MCF 10A (cell line): ENCODE measurements at regions of chr19 and their contacts with region 1.

Region 1: DNA sequence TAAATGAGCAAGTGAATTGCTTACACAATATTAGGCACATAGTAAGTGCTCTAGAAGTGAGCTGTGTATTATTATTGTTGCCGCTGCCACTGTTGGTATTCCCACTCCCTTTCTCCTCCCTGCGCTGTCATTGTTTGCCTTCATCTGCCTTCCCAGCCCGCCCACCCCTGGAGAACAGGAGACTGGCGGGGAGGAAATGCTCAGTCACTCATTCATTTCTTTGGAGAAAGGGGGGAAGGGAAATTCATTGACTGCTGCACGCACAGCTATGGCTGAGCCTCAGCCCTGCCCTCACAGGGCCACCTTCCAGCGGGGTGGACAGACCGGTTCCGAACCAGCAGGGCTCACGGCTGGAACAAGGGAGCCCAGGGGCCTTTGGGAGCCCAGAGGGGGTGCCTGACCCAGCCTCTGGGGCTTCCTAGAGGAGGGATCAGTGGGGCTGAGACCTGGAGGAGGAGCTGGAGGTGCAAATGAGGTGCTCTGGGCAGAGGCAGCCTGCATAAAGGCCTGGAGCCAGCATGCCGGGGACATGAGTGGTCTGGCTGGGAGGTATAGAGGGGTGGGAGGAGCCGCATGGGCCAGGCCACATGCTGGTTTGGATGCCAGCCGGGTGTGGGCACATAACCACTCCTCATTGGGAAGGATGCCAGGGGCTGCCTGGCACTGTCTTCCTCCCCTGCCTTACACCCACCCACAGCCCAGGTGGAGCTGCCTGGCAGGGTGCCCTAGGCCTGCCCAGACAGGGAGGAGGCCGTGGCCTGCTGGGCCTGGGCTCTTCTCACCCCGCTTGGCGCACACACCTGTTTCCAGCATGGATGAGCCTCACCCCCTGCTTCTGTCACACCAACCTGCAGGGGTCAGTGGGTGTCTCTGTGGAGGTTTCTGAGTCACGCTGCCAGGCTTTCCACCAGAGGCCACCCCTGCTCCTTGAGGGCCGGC is 26.8 kb downstream of the PPP5C start:
- DNase-seq: peak; percentile 100
- H3K4me3 Mint-ChIP-seq: peak overlapping the region; percentile 61
- H3K27ac Mint-ChIP-seq: peak overlapping the region; percentile 77
- H3K4me1 Mint-ChIP-seq: peaks cover 47% of the 10 kb centered on the region
- H3K27me3 Mint-ChIP-seq: no peaks in the 10 kb centered on the region
- CTCF ChIP-seq: no peak

Region 2: DNA sequence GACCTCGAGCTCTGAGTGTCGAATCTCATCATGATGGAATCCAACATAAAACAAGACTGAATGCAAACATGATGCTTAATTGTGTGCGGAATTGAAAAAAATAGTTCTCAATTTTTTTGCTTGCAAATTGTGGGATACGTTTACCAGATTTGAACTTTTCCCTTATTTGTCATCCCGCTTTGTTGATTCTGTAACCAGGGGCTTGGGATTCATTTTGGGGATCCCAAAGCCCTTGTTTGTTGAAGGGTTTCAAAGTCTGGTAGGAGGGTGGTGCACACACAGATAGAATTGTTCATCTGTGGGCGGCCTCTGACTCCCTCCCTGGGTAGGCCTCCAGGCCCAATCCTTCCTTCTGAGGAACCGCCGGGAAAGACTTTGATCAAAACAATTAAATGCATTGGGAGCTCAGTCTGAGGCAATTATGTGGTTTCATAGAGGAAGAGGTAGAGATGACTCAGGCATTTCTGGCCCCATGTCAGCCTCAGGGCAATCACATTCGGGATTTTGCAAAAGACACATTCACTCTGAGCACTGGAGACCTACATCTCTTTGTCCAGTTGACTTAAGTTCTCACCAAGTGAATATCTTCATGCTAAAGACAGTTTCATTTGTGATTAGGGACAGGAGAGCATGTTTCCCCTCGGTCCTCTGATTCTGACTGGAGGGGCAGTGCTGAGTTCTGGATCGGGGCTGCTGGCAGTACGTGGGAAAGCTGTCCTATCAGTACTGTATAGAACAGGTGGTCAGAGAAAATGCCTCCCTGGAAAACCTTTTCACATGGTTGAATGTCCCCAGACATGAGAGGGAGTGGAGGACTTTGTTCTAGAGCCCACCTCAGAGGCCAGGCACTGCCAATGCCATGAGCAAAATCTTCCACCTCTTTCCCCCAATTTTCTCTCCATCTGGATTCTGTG is 305.1 kb before region 1 on chr19:
- CTCF ChIA-PET with region 1: no interaction called
- POLR2A ChIA-PET with region 1: no interaction called
- intact Hi-C with region 1: loop called (anchors 5 kb)
- DNase-seq: peak; percentile 99
- H3K4me3 Mint-ChIP-seq: peak overlapping the region; percentile 41
- H3K27ac Mint-ChIP-seq: peak overlapping the region; percentile 77
- H3K4me1 Mint-ChIP-seq: peaks cover 62% of the 10 kb centered on the region
- H3K27me3 Mint-ChIP-seq: no peaks in the 10 kb centered on the region
- CTCF ChIP-seq: no peak

Region 3: GRCh38 chr19:46283771-46284170 is 89.9 kb before region 1 on chr19:
- CTCF ChIA-PET with region 1: interaction called, 33 read pairs
- POLR2A ChIA-PET with region 1: interaction called, 15 read pairs
- intact Hi-C with region 1: loop called (anchors 1 kb)
- DNase-seq: no peak
- H3K4me3 Mint-ChIP-seq: no peak overlapping the region
- H3K27ac Mint-ChIP-seq: no peak overlapping the region
- H3K4me1 Mint-ChIP-seq: peaks cover 4% of the 10 kb centered on the region
- H3K27me3 Mint-ChIP-seq: no peaks in the 10 kb centered on the region
- CTCF ChIP-seq: no peak

Region 4: GRCh38 chr19:46288896-46289588 is 84.6 kb before region 1 on chr19:
- CTCF ChIA-PET with region 1: interaction called, 3 read pairs
- POLR2A ChIA-PET with region 1: interaction called, 15 read pairs
- intact Hi-C with region 1: no loop called
- DNase-seq: peak; percentile 92
- H3K4me3 Mint-ChIP-seq: peak overlapping the region; percentile 48
- H3K27ac Mint-ChIP-seq: peak overlapping the region; percentile 88
- H3K4me1 Mint-ChIP-seq: peaks cover 17% of the 10 kb centered on the region
- H3K27me3 Mint-ChIP-seq: no peaks in the 10 kb centered on the region
- CTCF ChIP-seq: no peak

Region 5: GRCh38 chr19:46299004-46299509 is 74.6 kb before region 1 on chr19:
- CTCF ChIA-PET with region 1: interaction called, 3 read pairs
- POLR2A ChIA-PET with region 1: interaction called, 40 read pairs
- intact Hi-C with region 1: no loop called
- DNase-seq: peak; percentile 96
- H3K4me3 Mint-ChIP-seq: peak overlapping the region; percentile 29
- H3K27ac Mint-ChIP-seq: peak overlapping the region; percentile 79
- H3K4me1 Mint-ChIP-seq: peaks cover 25% of the 10 kb centered on the region
- H3K27me3 Mint-ChIP-seq: no peaks in the 10 kb centered on the region
- CTCF ChIP-seq: no peak

Region 6: DNA sequence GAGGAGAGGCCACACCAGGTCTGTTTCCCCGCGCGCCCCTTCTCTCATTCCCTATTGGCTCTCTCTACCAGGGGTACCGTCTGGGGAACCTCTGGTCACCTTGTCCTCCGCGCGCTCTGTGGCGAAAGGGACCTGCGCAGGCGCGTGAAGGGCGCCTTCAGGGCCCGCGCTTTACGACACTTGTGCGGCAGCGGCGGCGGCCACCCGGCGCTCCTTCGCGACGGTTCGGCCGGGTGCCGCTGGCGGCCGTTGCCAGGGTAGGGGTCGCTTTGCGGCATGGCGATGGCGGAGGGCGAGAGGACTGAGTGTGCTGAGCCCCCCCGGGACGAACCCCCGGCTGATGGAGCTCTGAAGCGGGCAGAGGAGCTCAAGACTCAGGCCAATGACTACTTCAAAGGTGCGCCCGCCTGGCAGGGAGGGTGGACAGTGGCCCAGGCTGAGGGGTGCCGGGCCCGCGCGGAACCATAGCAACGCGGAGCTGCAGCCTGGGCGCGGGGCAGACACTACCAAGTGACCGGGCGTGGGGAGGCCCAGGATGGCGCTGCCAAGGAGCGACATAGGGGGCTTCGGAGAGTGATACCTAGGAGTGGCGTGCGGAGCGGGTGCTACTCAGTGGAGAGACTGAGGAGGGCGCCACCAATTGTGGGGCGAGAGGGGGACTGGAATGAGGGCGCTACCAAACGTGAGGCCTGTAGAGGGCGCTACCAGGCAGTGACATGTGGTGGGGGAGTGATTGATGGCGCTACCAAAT is 26.7 kb before region 1 on chr19 and contains the start of gene PPP5C:
- CTCF ChIA-PET with region 1: interaction called, 11 read pairs
- POLR2A ChIA-PET with region 1: interaction called, 11 read pairs
- intact Hi-C with region 1: loop called (anchors 2 kb)
- DNase-seq: peak; percentile 91
- H3K4me3 Mint-ChIP-seq: peak within 1 kb of the TSS; percentile 100
- H3K27ac Mint-ChIP-seq: peak within 1 kb of the TSS; percentile 92
- H3K4me1 Mint-ChIP-seq: peaks cover 42% of the 10 kb centered on the region
- H3K27me3 Mint-ChIP-seq: no peaks in the 10 kb centered on the region
- CTCF ChIP-seq: peak; percentile 73
- total RNA-seq, gene PPP5C: 75.6 and 81.5 TPM in 2 replicates

Region 7: DNA sequence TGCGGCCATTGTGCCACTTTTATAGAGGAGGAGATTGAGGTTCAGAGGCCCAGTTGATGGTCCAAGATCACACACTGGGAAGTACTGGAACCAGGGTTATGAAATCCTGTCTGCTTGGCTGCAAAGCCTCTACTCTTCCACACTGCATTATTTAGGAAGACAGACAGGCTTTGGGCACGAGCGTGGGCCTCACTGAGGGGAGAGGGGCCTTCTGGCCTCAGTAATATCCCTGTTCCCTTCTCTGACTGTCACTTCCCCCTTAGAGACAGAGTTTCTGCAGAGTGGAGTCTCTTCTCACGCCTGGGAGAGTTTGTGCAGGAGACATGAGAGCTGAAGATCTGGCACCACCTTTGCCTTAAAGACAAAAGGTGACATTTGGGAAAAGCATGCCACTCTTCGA is 171.0 kb after region 1 on chr19:
- CTCF ChIA-PET with region 1: no interaction called
- POLR2A ChIA-PET with region 1: no interaction called
- intact Hi-C with region 1: no loop called
- DNase-seq: no peak
- H3K4me3 Mint-ChIP-seq: no peak overlapping the region
- H3K27ac Mint-ChIP-seq: no peak overlapping the region
- H3K4me1 Mint-ChIP-seq: no peaks in the 10 kb centered on the region
- H3K27me3 Mint-ChIP-seq: no peaks in the 10 kb centered on the region
- CTCF ChIP-seq: no peak